ENCODE measurements at regions of chr6 and their contacts with region 1.

Region 1: GRCh38 chr6:31862344-31863227 is at the start of gene NEU1:
- DNase-seq: peak; percentile 100
- ATAC-seq: peak; percentile 81
- H3K4me3 ChIP-seq: peak within 1 kb of the TSS; percentile 75 to 99 (median 84)
- H3K27ac ChIP-seq: peak within 1 kb of the TSS; percentile 92
- H3K4me1 ChIP-seq: peaks cover 68% of the 10 kb centered on the region
- H3K27me3 ChIP-seq: no peaks in the 10 kb centered on the region; a peak in 1 of 5 replicates
- CTCF ChIP-seq: peak; percentile 20
- EP300 ChIP-seq: peak in 1 of 2 experiments; percentile 49; a peak in 2 of 4 replicates
- POLR2A ChIP-seq: peak in 1 of 2 experiments; percentile 100; a peak in 2 of 4 replicates
- RAD21 ChIP-seq: peak; percentile 78
- total RNA-seq, gene NEU1: 139 and 297 TPM in 2 replicates

Region 2: GRCh38 chr6:30169658-30170614 is 1692.7 kb before region 1 on chr6:
- CTCF ChIA-PET with region 1: no interaction called
- POLR2A ChIA-PET with region 1: no interaction called
- in situ Hi-C with region 1: no loop called
- intact Hi-C with region 1: no loop called
- DNase-seq: peak; percentile 68
- ATAC-seq: peak; percentile 93
- H3K4me3 ChIP-seq: no peak overlapping the region
- H3K27ac ChIP-seq: no peak overlapping the region
- H3K4me1 ChIP-seq: peaks cover 28% of the 10 kb centered on the region
- H3K27me3 ChIP-seq: peaks cover 0 to under 1% of the 10 kb centered on the region in 2 experiments; a peak in 1 of 5 replicates
- CTCF ChIP-seq: peak; percentile 86
- EP300 ChIP-seq: no peak
- POLR2A ChIP-seq: no peak
- RAD21 ChIP-seq: peak; percentile 89

Region 3: DNA sequence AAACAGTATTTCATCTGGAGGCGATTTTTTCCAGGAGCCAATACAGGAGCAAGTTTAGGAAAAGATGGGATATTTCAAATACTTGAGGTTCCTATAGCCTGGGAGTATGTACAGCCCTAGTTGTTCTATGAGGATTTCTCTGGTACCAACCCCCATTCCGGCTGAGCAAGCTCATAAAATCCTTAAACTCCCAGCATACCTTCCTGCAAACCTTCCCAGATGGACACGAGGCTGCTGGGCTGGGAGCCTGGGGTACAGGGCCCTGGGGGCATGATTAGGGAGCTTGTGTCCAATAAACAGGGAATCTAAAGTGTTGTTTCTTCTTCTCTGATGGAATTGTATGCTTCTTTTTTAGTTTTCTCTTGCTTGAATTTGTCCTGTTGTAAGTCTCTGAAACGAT is 240.6 kb before region 1 on chr6:
- CTCF ChIA-PET with region 1: no interaction called
- POLR2A ChIA-PET with region 1: no interaction called
- in situ Hi-C with region 1: no loop called
- intact Hi-C with region 1: no loop called
- DNase-seq: no peak
- ATAC-seq: no peak
- H3K4me3 ChIP-seq: peak overlapping the region; percentile 83 to 100 (median 99)
- H3K27ac ChIP-seq: peak overlapping the region; percentile 98
- H3K4me1 ChIP-seq: peaks cover 21% of the 10 kb centered on the region
- H3K27me3 ChIP-seq: no peaks in the 10 kb centered on the region; a peak in 1 of 5 replicates
- CTCF ChIP-seq: no peak
- EP300 ChIP-seq: no peak
- POLR2A ChIP-seq: no peak
- RAD21 ChIP-seq: no peak

Region 4: DNA sequence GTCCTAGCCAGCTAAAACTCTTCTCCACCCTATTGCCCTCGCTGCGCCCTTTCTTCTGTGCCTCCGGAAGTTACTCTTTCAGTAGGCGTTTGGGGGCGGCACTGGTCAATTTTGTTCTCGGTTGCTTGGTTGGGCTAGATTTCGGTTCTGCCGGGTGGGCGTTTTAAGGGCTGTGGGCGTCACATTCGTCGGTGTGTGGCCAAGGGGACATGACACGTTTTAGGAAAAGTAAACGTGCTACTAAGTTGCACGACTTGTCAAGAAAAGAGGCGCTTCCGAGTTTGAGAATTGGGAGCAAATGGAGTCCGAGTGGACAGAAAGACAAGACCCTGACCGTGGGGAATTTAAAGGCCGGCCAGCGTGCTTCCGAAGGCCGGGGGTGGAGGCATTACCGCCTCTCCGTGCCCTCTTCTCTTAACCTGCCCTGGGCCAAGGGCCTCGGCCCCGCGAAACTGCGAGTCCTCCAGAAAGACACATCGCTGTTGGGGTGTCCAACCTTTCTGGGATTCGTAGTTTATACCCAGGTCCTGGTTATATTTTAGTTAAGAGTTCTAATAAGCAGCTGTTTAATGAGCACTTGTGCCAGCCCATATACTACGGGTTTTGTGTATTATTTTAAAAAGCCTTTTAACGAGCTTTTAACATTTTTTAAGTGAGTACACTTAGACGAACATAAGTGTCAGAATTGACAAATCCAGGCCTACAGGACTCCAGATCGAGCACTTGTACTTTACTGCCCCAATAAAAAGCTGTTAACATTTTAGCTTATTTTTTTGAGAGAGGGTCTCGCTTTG is 209.5 kb before region 1 on chr6:
- CTCF ChIA-PET with region 1: no interaction called
- POLR2A ChIA-PET with region 1: interaction called, 15 read pairs
- in situ Hi-C with region 1: no loop called
- intact Hi-C with region 1: no loop called
- DNase-seq: peak; percentile 98
- ATAC-seq: peak; percentile 55
- H3K4me3 ChIP-seq: peak overlapping the region; percentile 73 to 88 (median 77)
- H3K27ac ChIP-seq: peak overlapping the region; percentile 96
- H3K4me1 ChIP-seq: peaks cover 70% of the 10 kb centered on the region
- H3K27me3 ChIP-seq: no peaks in the 10 kb centered on the region; a peak in 2 of 5 replicates
- CTCF ChIP-seq: peak; percentile 63
- EP300 ChIP-seq: no peak; a peak in 3 of 4 replicates
- POLR2A ChIP-seq: peak in 1 of 2 experiments; percentile 72; a peak in 1 of 4 replicates
- RAD21 ChIP-seq: 0 out of 2 replicates have a peak, but pooled peaks have one; percentile 7

Region 5: DNA sequence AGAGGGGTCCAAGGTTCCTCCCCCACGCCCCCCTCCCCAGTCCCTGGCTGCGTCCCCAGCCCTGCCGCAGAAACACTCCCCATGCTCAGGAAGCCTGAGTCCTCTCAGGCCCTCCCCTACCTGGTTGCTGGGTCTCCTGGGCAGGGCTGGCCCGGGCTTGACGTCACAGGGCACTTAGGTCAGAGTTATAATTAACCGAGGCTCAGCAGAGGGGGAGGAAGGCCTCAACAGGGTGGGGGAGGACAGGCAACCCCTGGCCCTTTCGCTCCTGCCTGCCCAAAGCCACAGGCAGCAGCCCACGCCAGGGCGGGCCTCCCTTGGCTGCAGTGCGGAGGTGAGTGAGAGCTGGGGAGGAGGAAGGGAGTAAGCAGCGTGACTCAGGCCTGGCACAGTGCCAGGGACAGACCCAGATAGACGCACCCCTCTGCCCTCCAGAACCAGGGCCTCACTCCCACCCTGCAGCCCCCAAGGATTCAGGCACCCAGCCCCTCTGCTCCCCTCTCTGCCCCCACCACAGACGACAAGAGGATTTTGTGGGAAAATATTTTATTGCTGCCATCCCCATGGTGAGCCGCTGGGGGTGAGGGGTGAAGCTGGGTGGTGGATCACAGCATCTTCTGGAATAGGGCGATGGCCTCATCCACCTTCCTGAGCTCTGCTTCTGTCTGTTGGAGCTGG is 85.5 kb before region 1 on chr6 and contains the start of gene VWA7:
- CTCF ChIA-PET with region 1: no interaction called
- POLR2A ChIA-PET with region 1: interaction called, 14 read pairs
- in situ Hi-C with region 1: no loop called
- intact Hi-C with region 1: loop called (anchors 1 kb)
- DNase-seq: peak; percentile 85
- ATAC-seq: peak; percentile 65
- H3K4me3 ChIP-seq: peak within 1 kb of the TSS; percentile 45 to 72 (median 48)
- H3K27ac ChIP-seq: peak within 1 kb of the TSS; percentile 70
- H3K4me1 ChIP-seq: peaks cover 57% of the 10 kb centered on the region
- H3K27me3 ChIP-seq: no peaks in the 10 kb centered on the region
- CTCF ChIP-seq: peak; percentile 26
- EP300 ChIP-seq: peak in 1 of 2 experiments; percentile 45; a peak in 1 of 4 replicates
- POLR2A ChIP-seq: no peak; a peak in 1 of 4 replicates
- RAD21 ChIP-seq: no peak
- total RNA-seq, gene VWA7: 0.79 and 0.86 TPM in 2 replicates

Region 6: DNA sequence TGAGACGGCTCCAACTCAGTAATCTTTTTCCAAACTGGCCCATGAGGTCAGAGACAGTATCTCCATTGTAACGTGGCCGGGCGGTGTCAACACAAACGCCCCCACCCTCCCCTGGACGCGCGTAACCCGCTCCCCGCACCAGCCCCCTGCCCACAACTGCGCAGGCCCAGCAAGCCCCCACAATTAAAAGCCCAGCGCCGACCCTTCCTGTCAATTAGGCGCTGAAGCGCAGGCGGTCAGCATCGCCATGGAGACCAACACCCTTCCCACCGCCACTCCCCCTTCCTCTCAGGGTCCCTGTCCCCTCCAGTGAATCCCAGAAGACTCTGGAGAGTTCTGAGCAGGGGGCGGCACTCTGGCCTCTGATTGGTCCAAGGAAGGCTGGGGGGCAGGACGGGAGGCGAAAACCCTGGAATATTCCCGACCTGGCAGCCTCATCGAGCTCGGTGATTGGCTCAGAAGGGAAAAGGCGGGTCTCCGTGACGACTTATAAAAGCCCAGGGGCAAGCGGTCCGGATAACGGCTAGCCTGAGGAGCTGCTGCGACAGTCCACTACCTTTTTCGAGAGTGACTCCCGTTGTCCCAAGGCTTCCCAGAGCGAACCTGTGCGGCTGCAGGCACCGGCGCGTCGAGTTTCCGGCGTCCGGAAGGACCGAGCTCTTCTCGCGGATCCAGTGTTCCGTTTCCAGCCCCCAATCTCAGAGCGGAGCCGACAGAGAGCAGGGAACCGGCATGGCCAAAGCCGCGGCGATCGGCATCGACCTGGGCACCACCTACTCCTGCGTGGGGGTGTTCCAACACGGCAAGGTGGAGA is 47.4 kb before region 1 on chr6 and contains the starts of genes HSPA1A and HSPA1L:
- CTCF ChIA-PET with region 1: no interaction called
- POLR2A ChIA-PET with region 1: interaction called, 16 read pairs
- in situ Hi-C with region 1: no loop called
- intact Hi-C with region 1: no loop called
- DNase-seq: peak; percentile 95
- ATAC-seq: peak; percentile 64
- H3K4me3 ChIP-seq: peak within 1 kb of the TSS; percentile 54 to 71 (median 55)
- H3K27ac ChIP-seq: peak within 1 kb of the TSS; percentile 95
- H3K4me1 ChIP-seq: peaks cover 35% of the 10 kb centered on the region
- H3K27me3 ChIP-seq: no peaks in the 10 kb centered on the region
- CTCF ChIP-seq: no peak
- EP300 ChIP-seq: peak in 1 of 2 experiments; percentile 63; a peak in 2 of 4 replicates
- POLR2A ChIP-seq: peak; percentile 99 to 100
- RAD21 ChIP-seq: peak; percentile 22; the same call in 1 of the 2 replicates
- total RNA-seq, gene HSPA1A: 83.5 and 85.0 TPM in 2 replicates
- total RNA-seq, gene HSPA1L: 0.55 and 0.94 TPM in 2 replicates

Region 7: GRCh38 chr6:31851485-31851832 is 11.1 kb before region 1 on chr6:
- CTCF ChIA-PET with region 1: no interaction called
- POLR2A ChIA-PET with region 1: interaction called, 93 read pairs
- in situ Hi-C with region 1: no loop called
- intact Hi-C with region 1: no loop called
- DNase-seq: no peak
- ATAC-seq: peak; percentile 9
- H3K4me3 ChIP-seq: no peak overlapping the region
- H3K27ac ChIP-seq: peak overlapping the region; percentile 43
- H3K4me1 ChIP-seq: peaks cover 35% of the 10 kb centered on the region
- H3K27me3 ChIP-seq: no peaks in the 10 kb centered on the region
- CTCF ChIP-seq: no peak
- EP300 ChIP-seq: no peak
- POLR2A ChIP-seq: no peak
- RAD21 ChIP-seq: no peak

Region 8: DNA sequence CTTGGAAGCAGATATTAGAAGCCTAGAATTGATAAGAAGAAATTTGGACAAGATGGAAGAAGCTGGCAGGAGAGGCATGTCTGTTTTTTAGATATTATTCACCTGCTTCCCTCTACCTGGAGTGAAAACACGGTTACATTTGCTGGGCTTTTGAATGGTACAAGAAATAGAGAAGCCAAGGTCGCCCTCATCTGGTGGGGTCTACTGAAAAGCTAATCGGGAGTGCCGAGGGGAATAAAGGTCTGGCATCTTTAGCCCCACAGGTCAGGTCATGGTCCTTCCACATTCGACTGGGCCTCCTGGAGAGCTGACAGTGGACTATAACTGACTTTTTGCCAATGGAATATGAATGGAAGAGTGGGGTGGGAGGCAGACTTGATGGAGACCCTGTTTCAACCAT is 60.4 kb after region 1 on chr6:
- CTCF ChIA-PET with region 1: no interaction called
- POLR2A ChIA-PET with region 1: interaction called, 10 read pairs
- in situ Hi-C with region 1: no loop called
- intact Hi-C with region 1: no loop called
- DNase-seq: peak; percentile 73
- ATAC-seq: peak; percentile 44
- H3K4me3 ChIP-seq: no peak overlapping the region
- H3K27ac ChIP-seq: no peak overlapping the region
- H3K4me1 ChIP-seq: peaks cover 80% of the 10 kb centered on the region
- H3K27me3 ChIP-seq: no peaks in the 10 kb centered on the region; a peak in 1 of 5 replicates
- CTCF ChIP-seq: peak; percentile 84
- EP300 ChIP-seq: no peak
- POLR2A ChIP-seq: no peak
- RAD21 ChIP-seq: peak; percentile 77

Region 9: GRCh38 chr6:31958741-31959739 is 96.5 kb after region 1 on chr6 and contains the starts of genes NELFE and SKIC2:
- CTCF ChIA-PET with region 1: no interaction called
- POLR2A ChIA-PET with region 1: interaction called, 16 read pairs
- in situ Hi-C with region 1: no loop called
- intact Hi-C with region 1: no loop called
- DNase-seq: peak; percentile 97
- ATAC-seq: peak; percentile 97
- H3K4me3 ChIP-seq: peak within 1 kb of the TSS; percentile 81 to 98 (median 95)
- H3K27ac ChIP-seq: peak within 1 kb of the TSS; percentile 75
- H3K4me1 ChIP-seq: peaks cover 31% of the 10 kb centered on the region
- H3K27me3 ChIP-seq: no peaks in the 10 kb centered on the region; a peak in 1 of 5 replicates
- CTCF ChIP-seq: no peak
- EP300 ChIP-seq: peak; percentile 23 to 56; a peak in 2 of 4 replicates
- POLR2A ChIP-seq: peak; percentile 70 to 73
- RAD21 ChIP-seq: peak; percentile 64
- total RNA-seq, gene NELFE: 69.8 and 80.4 TPM in 2 replicates
- total RNA-seq, gene SKIC2: 59.7 and 67.1 TPM in 2 replicates